ENCODE measurements at regions of chr7 and their contacts with region 1.

Region 1: GRCh38 chr7:33050535-33051318 is 11.8 kb downstream of the NT5C3A start:
- DNase-seq: no peak
- ATAC-seq: peak; percentile 48
- H3K4me3 Mint-ChIP-seq: no peak overlapping the region
- H3K27ac Mint-ChIP-seq: no peak overlapping the region
- H3K4me1 Mint-ChIP-seq: peaks cover 43% of the 10 kb centered on the region
- H3K27me3 Mint-ChIP-seq: no peaks in the 10 kb centered on the region

Region 2: GRCh38 chr7:33062782-33063443 is 12.2 kb after region 1 on chr7:
- CTCF ChIA-PET with region 1: interaction called, 16 read pairs
- DNase-seq: peak; percentile 96
- ATAC-seq: peak; percentile 94
- H3K4me3 Mint-ChIP-seq: peak overlapping the region; percentile 96
- H3K27ac Mint-ChIP-seq: peak overlapping the region; percentile 86
- H3K4me1 Mint-ChIP-seq: peaks cover 34% of the 10 kb centered on the region
- H3K27me3 Mint-ChIP-seq: peaks cover 8% of the 10 kb centered on the region

Measured in activated CD8-positive, alpha-beta memory T cell treated with anti-CD3 and anti-CD28 coated beads, Interleukin-2, amount 10 ng/mL, durations not matched to agents 7 days and 5 days (primary cell).